Activated CD4-positive, alpha-beta T cell treated with anti-CD3 and anti-CD28 coated beads, Interleukin-2, amount 10 ng/mL, durations not matched to agents 24 days and 14 days (primary cell): ENCODE measurements at regions of chr7 and their contacts with region 1.

Region 1: DNA sequence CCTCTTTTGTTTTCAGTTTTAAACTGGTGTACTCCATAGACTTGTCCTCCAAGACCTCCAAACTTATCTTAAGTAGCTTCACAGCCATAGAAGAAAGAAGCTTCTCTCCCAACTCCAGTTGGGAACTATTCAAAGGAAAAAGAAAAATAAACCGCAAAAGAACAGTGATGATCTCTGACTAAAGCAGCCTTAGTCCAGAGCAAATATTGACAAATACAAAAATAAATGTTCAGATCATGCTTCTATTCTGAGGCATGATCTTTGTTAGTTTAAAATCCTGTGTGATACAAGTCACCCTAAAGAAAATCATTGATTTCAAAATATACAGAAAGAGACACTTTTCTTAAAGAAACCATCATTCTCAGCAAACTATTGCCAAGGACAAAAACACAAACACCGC is 373.0 kb upstream of the SMIM30 start:
- DNase-seq: no peak
- H3K4me3 Mint-ChIP-seq: no peak overlapping the region
- H3K27ac Mint-ChIP-seq: no peak overlapping the region
- H3K4me1 Mint-ChIP-seq: no peaks in the 10 kb centered on the region
- H3K27me3 Mint-ChIP-seq: no peaks in the 10 kb centered on the region

Region 2: DNA sequence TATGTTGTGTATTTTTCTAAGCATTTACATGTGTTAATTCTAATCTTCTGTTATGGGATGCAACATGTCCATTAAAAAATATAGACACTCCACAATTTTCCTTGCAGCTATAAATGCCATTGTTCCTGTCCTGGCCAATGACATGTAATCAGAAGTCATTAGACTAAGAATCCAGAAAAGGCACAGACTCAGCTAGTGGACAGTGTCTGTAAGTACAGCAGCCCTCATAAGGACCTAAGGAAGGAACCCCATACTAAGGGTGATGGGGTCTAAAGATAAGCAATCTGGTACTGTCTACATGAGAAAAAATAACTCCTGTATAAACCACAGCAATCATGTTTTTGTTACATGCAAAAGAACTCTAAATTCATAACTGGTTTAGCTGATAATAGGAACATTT is 520.5 kb before region 1 on chr7:
- intact Hi-C with region 1: loop called (anchors 10 kb)
- DNase-seq: no peak
- H3K4me3 Mint-ChIP-seq: no peak overlapping the region
- H3K27ac Mint-ChIP-seq: no peak overlapping the region
- H3K4me1 Mint-ChIP-seq: no peaks in the 10 kb centered on the region
- H3K27me3 Mint-ChIP-seq: peaks cover 2% of the 10 kb centered on the region